ENCODE measurements at regions of chr6 and their contacts with region 1.

Region 1: GRCh38 chr6:53484476-53485280 is 60.2 kb downstream of the GCLC start:
- DNase-seq: peak; percentile 27
- H3K4me3 ChIP-seq: peak overlapping the region in 1 of 2 experiments; percentile 19; a peak in 1 of 4 replicates
- H3K27ac ChIP-seq: no peak overlapping the region
- H3K4me1 ChIP-seq: peaks cover 0 to 8% of the 10 kb centered on the region in 2 experiments; a peak in 2 of 4 replicates
- H3K27me3 ChIP-seq: peaks cover 17% of the 10 kb centered on the region
- CTCF ChIP-seq: peak; percentile 99
- EP300 ChIP-seq: no peak
- RAD21 ChIP-seq: peak; percentile 98

Region 2: DNA sequence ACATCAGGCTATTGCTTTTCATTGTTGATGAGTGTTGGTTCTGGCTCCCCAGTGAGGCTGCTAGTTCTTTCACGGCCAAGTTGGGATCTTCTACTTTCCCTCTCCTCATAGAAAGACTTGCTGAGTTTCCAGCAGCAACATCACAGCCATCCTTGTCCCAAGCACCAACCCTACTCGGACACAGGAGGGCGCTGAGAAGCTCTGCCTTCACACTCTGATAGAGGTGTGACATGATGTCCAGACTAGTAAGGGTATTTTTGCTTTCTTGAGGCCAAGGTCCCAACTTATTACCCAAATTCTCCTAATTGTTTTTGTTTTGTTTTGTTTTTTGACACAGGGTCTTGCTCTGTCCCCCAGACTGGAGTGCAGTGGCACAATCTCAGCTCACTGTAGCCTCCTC is 333.0 kb before region 1 on chr6:
- CTCF ChIA-PET with region 1: interaction called, 10 read pairs
- POLR2A ChIA-PET with region 1: no interaction called
- DNase-seq: no peak
- H3K4me3 ChIP-seq: no peak overlapping the region
- H3K27ac ChIP-seq: no peak overlapping the region
- H3K4me1 ChIP-seq: no peaks in the 10 kb centered on the region
- H3K27me3 ChIP-seq: peaks cover 32% of the 10 kb centered on the region; the same call in 1 of the 2 replicates
- CTCF ChIP-seq: peak; percentile 32; the same call in 1 of the 2 replicates
- EP300 ChIP-seq: no peak
- RAD21 ChIP-seq: no peak

Region 3: DNA sequence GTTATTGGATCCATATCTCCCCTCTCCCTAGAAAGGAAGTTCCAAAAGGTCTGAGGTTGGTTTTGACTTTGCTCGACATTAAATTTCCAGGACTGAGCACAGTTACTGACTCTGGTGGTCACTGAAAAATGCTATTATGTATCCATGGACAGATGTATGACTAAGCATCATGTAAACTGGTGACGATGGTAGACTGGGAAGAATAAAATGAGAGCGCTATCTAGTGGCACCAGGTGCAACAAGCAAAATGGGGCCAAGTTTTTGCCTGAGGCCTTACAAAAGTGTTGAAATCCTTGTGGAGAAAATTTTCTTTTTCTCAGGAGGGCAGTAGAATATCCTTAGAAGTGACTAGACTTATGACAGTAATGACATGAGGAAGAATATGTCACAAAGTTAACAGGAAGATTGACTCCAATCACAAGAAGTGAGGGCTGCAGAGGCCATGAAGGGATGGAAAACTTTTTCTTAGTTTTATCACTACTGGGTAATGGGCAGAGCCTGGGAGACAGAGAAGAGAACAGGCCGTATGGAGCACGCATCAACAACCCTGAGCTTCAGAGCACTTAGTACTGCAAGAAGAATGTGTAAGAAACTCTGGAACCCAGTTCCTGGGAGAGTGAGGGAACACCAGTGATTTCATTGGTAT is 47.0 kb before region 1 on chr6:
- CTCF ChIA-PET with region 1: interaction called, 10 read pairs
- POLR2A ChIA-PET with region 1: no interaction called
- DNase-seq: peak; percentile 24
- H3K4me3 ChIP-seq: no peak overlapping the region
- H3K27ac ChIP-seq: no peak overlapping the region
- H3K4me1 ChIP-seq: no peaks in the 10 kb centered on the region; a peak in 1 of 4 replicates
- H3K27me3 ChIP-seq: no peaks in the 10 kb centered on the region
- CTCF ChIP-seq: peak; percentile 80
- EP300 ChIP-seq: no peak
- RAD21 ChIP-seq: peak; percentile 77